HAP-1 (cell line): ENCODE measurements at regions of chr1 and their contacts with region 1.

Region 1: DNA sequence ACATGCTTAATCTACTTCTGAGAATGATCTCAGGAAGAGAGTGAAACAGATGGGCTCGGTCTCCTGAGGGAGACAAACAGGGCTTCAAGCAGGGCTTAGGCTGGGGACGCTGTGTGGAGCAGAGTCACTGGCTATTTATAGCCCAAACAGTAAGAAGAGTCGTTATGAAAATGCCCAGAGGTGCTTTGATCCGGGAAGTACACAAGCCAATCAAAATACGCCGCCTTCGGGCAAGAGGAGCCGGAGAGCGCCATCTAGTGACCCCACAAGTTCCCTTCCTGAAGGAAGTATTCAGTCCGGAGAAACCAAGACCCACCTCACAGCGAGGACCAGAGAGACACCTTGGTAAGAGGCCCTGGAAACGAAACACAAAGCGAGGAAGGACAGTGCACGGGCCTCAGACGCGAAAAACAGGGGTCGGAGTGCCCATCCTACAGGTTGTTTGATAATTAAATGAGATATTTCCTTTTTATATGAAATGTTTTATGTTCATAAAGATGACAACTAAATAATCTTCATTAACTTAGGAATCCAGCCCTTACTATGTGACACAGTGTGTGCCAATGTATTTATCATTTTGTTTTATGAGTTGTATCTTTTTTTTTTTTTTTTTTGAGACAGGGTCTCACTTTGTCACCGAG is 25.0 kb upstream of the SCCPDH start:
- DNase-seq: peak; percentile 92 to 93
- H3K4me3 ChIP-seq: no peak overlapping the region
- H3K4me1 ChIP-seq: peaks cover 4% of the 10 kb centered on the region
- H3K27me3 ChIP-seq: no peaks in the 10 kb centered on the region

Region 2: DNA sequence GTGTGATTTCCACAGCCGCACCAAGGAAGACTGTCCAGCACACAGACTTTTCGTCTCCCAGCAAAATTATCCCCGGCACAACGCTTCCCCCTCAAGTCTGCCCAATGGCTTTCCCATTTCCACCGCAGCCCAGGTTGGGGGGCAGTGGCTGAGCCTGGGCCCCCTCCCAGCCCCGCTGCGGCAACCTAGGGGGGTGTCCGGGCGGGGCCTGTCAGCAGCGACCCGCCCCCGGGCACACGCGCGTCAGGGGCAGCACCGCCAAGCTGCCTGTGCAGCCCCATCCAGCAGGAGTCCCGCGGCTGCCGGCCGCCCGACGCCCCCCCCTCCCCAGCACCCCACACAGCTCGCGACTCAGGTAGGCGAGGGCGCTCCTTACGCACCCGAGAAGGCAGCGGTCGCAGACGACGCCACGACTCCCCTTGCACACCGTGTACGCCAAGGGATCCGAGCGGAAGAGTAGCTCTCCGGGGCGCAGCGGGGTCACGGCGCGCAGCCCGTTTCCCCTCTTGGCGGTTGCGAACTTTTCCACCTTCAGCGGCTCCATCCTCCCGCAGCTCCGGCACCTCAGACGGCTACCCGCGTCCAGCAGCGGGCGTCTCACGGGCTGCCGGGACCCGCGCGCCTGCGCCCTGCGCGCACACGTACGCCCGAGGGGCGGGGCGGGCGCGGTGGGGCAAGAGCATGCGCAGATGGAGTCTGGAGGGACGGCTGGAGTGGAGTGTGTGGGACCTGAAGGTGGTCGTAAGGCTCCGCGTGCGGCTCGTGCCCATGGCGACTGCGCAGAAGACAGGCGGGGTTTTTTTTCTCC is 192.3 kb before region 1 on chr1 and contains the start of gene SMYD3:
- in situ Hi-C with region 1: loop called (anchors 5 kb)
- DNase-seq: peak; percentile 79 to 84
- H3K4me3 ChIP-seq: peak within 1 kb of the TSS; percentile 81
- H3K4me1 ChIP-seq: peaks cover 6% of the 10 kb centered on the region
- H3K27me3 ChIP-seq: no peaks in the 10 kb centered on the region

Region 3: DNA sequence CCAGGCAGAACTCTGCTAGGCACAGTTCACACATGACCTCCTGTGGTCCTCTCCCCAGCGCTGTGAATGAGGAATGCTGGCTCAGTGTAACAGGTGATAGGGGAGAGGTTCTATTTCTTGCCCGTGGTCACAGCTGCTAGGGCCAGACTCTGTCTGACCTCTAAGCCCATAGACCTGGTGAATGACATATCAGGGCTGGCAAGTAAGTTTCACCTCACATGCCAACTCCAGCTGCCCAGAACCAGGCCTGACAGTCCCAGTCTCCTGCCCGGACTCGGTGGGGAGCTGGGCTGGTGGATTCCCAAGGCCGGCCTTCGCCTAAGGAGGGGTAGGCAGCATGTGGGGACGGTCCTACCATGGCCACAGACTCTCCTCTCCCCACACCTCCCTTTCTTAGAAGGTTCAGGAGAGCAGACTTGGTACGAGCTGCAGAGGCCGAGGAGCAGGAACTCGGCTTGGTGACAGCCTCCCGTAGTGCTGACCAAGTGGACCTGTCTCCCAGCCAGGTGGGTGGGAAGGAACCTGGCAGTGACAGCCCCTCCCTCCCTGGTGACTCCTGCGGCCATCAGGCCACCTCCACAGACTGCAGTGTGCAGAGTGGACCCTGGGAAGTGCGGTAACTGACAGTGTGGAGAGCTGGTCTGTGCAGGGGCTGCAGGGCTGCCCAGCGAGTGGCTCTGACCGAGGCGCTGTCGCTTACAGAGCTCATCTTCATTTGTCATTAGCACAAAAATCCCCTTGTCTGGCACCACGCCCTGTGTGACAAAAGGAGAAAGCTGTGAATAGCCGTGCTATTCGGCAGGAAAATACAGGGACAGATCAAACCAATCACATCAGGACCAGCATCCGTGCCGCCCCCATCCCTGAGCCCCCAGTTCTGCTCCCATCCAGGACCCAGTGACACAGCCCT is 99.6 kb after region 1 on chr1:
- in situ Hi-C with region 1: no loop called
- DNase-seq: peak in 1 of 2 experiments; percentile 59
- H3K4me3 ChIP-seq: no peak overlapping the region
- H3K4me1 ChIP-seq: no peaks in the 10 kb centered on the region
- H3K27me3 ChIP-seq: no peaks in the 10 kb centered on the region